Colonic mucosa (tissue), 4 donors: ENCODE measurements at regions of chr4 and their contacts with region 1.

Region 1: DNA sequence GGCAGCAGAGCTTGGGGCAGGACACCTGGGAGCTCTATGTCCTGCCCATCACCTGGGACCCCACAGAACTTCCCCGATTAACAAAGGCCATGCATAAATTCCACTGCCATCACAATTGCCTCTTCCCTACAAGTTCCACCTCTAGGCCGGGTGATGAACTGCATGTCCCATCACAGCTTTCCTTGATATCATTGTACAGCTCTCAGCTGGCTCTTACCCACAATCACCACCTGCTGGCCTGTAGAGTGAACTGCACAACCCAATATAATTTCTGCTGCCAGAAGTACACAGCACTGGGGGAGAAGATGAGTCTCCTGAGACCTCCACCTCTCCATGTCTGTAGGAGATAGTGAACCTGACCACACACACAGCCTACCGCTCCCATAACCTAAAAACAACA is 285.0 kb upstream of the AADAT start:
- DNase-seq: peak; percentile 40
- H3K4me3 ChIP-seq: no peak overlapping the region
- H3K27ac ChIP-seq: no peak overlapping the region
- H3K4me1 ChIP-seq: no peaks in the 10 kb centered on the region
- H3K27me3 ChIP-seq: no peaks in the 10 kb centered on the region
- CTCF ChIP-seq: peak; percentile 49

Region 2: DNA sequence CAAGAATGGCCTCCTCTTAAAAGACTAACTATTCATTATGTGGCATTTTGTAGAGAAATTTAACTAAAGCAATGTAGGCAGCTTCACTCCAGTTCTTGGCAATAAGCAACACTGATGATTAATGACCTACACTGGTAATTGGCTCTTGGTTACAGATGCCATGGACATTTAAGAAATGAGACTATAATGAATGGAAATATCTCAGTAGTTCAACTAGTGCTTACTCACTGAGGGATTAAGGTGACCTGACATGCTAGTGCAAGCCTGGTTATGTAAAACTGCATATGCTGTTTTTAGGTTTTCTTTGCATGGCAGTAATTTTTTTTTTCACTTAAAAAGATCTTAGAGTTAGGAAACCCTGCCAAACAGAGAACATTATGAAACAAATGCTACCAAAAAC is 132.3 kb before region 1 on chr4:
- intact Hi-C with region 1: no loop called
- DNase-seq: no peak
- H3K4me3 ChIP-seq: no peak overlapping the region
- H3K27ac ChIP-seq: no peak overlapping the region
- H3K4me1 ChIP-seq: no peaks in the 10 kb centered on the region
- H3K27me3 ChIP-seq: no peaks in the 10 kb centered on the region
- CTCF ChIP-seq: no peak

Region 3: GRCh38 chr4:170259631-170260153 is 115.1 kb before region 1 on chr4:
- intact Hi-C with region 1: loop called (anchors 10 kb)
- DNase-seq: peak; percentile 87
- H3K4me3 ChIP-seq: no peak overlapping the region
- H3K27ac ChIP-seq: no peak overlapping the region
- H3K4me1 ChIP-seq: no peaks in the 10 kb centered on the region
- H3K27me3 ChIP-seq: no peaks in the 10 kb centered on the region
- CTCF ChIP-seq: peak; percentile 72